Ascending aorta (tissue), 2 donors: ENCODE measurements at regions of chr14 and their contacts with region 1.

Region 1: GRCh38 chr14:69611201-69612011 is at the start of gene SUSD6:
- DNase-seq: peak; percentile 75 to 96
- H3K4me3 ChIP-seq: peak within 1 kb of the TSS; percentile 71 to 98
- H3K27ac ChIP-seq: peak within 1 kb of the TSS; percentile 97 to 99
- H3K4me1 ChIP-seq: peaks cover 17 to 36% of the 10 kb centered on the region in 2 donors
- H3K27me3 ChIP-seq: no peaks in the 10 kb centered on the region
- CTCF ChIP-seq: no peak
- total RNA-seq, gene SUSD6: 23.3 TPM

Region 2: GRCh38 chr14:69547701-69548348 is 63.6 kb before region 1 on chr14:
- intact Hi-C with region 1: no loop called
- DNase-seq: no peak
- H3K4me3 ChIP-seq: no peak overlapping the region
- H3K27ac ChIP-seq: no peak overlapping the region
- H3K4me1 ChIP-seq: no peaks in the 10 kb centered on the region
- H3K27me3 ChIP-seq: no peaks in the 10 kb centered on the region
- CTCF ChIP-seq: peak in 1 of 3 experiments; percentile 35

Region 3: DNA sequence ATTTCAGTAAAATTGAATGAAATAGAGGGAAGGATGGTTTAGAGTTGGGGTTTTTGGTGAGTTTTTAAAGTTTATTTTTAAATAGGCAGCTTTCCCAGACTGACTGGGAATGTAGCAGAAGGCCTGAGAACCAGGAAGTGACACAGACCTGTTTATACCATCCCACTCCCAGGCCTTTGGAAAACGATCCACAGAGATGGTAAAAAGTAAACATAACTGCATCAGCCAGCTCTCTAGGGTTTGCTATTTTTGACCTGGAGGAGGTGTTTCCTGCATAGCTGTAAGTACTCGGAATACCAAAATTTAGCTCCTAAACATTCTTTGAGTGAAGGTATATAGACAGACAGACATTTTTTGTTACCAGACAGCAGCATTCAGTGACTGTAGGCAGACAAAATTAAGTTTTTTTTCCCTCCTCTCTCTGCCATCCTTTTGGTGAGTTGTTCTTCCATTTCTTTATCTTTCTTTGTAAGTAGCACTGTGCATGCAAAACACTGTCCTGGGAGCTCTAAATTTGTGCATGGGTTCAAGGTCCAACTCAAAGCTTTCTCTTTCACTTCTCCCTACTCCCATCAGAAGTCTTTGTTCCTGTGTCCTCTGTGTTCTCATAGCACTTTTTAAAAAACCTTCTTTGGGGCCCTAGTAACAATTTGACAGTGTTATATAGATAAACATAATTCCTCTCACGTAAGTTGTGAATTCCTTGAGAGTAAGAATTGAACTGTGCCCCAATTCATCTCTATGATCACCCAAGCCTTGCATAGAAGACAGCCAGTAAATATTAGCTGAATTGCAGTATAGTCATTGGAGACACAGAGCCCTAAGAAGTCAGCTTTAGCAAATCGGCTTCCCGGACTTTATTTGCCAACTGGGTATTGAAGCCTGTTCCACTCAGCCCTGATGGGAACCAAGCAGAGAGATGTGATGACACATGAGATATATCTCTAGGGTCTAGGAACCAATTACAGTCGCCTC is 37.4 kb after region 1 on chr14:
- intact Hi-C with region 1: loop called (anchors 1 kb)
- DNase-seq: no peak
- H3K4me3 ChIP-seq: peak overlapping the region; percentile 5 to 12
- H3K27ac ChIP-seq: peak overlapping the region; percentile 75
- H3K4me1 ChIP-seq: peaks cover 28 to 63% of the 10 kb centered on the region in 2 donors
- H3K27me3 ChIP-seq: no peaks in the 10 kb centered on the region
- CTCF ChIP-seq: no peak

Region 4: GRCh38 chr14:69667938-69668335 is 56.5 kb after region 1 on chr14:
- intact Hi-C with region 1: loop called (anchors 2 kb)
- DNase-seq: no peak
- H3K4me3 ChIP-seq: no peak overlapping the region
- H3K27ac ChIP-seq: peak overlapping the region in 1 of 2 donors; percentile 39
- H3K4me1 ChIP-seq: peaks cover 17 to 81% of the 10 kb centered on the region in 2 donors
- H3K27me3 ChIP-seq: no peaks in the 10 kb centered on the region
- CTCF ChIP-seq: no peak

Region 5: DNA sequence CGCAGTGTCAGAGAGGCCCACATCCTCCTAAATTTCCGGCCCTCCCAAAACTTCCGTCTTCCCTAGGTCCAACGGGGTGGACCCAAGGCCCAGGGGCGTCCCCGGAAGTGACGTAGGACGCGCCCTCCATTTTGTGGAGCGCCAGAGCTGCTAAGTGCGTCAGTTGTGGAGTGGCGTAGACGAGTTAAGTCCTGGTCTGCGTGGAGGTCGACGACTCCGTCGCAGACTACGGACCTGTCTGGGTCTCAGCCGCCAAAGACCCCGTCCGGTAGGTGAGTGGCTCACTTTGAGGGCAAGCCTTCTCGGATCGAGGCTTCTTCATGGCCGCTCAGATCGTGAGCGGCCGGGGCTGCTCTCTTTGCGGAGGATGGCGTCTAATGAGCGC is 155.6 kb after region 1 on chr14 and contains the start of gene SRSF5:
- intact Hi-C with region 1: loop called (anchors 2 kb)
- DNase-seq: peak; percentile 84 to 98
- H3K4me3 ChIP-seq: peak within 1 kb of the TSS; percentile 91 to 99
- H3K27ac ChIP-seq: peak within 1 kb of the TSS; percentile 100
- H3K4me1 ChIP-seq: peaks cover 19 to 32% of the 10 kb centered on the region in 2 donors
- H3K27me3 ChIP-seq: no peaks in the 10 kb centered on the region
- CTCF ChIP-seq: no peak
- total RNA-seq, gene SRSF5: 113 TPM